ENCODE measurements at regions of chr14 and their contacts with region 1.

Region 1: GRCh38 chr14:69346710-69347109 is 51.4 kb downstream of the ERH start:
- DNase-seq: peak; percentile 33 to 95
- H3K4me3 ChIP-seq: peak overlapping the region in 2 of 4 experiments; percentile 7 to 14; a peak in 1 of 8 replicates
- H3K27ac ChIP-seq: no peak overlapping the region
- H3K4me1 ChIP-seq: peaks cover 0 to 6% (median 2%) of the 10 kb centered on the region in 4 experiments; a peak in 5 of 7 replicates
- H3K27me3 ChIP-seq: no peaks in the 10 kb centered on the region
- CTCF ChIP-seq: peak; percentile 92 to 93 (median 92)
- EP300 ChIP-seq: no peak
- POLR2A ChIP-seq: no peak
- RAD21 ChIP-seq: peak; percentile 73 to 82

Region 2: GRCh38 chr14:69281450-69282169 is 65.1 kb before region 1 on chr14:
- CTCF ChIA-PET with region 1: interaction called, 21 read pairs
- POLR2A ChIA-PET with region 1: interaction called, 3 read pairs
- DNase-seq: no peak
- H3K4me3 ChIP-seq: no peak overlapping the region
- H3K27ac ChIP-seq: no peak overlapping the region
- H3K4me1 ChIP-seq: no peaks in the 10 kb centered on the region
- H3K27me3 ChIP-seq: no peaks in the 10 kb centered on the region
- CTCF ChIP-seq: no peak
- EP300 ChIP-seq: no peak
- POLR2A ChIP-seq: no peak
- RAD21 ChIP-seq: no peak

Region 3: GRCh38 chr14:69299286-69300035 is 47.2 kb before region 1 on chr14:
- CTCF ChIA-PET with region 1: interaction called, 91 read pairs
- POLR2A ChIA-PET with region 1: no interaction called
- DNase-seq: peak in 1 of 2 experiments; percentile 55
- H3K4me3 ChIP-seq: no peak overlapping the region
- H3K27ac ChIP-seq: no peak overlapping the region
- H3K4me1 ChIP-seq: no peaks in the 10 kb centered on the region
- H3K27me3 ChIP-seq: no peaks in the 10 kb centered on the region
- CTCF ChIP-seq: peak; percentile 65 to 90 (median 86)
- EP300 ChIP-seq: no peak
- POLR2A ChIP-seq: no peak
- RAD21 ChIP-seq: peak; percentile 66 to 72

Region 4: DNA sequence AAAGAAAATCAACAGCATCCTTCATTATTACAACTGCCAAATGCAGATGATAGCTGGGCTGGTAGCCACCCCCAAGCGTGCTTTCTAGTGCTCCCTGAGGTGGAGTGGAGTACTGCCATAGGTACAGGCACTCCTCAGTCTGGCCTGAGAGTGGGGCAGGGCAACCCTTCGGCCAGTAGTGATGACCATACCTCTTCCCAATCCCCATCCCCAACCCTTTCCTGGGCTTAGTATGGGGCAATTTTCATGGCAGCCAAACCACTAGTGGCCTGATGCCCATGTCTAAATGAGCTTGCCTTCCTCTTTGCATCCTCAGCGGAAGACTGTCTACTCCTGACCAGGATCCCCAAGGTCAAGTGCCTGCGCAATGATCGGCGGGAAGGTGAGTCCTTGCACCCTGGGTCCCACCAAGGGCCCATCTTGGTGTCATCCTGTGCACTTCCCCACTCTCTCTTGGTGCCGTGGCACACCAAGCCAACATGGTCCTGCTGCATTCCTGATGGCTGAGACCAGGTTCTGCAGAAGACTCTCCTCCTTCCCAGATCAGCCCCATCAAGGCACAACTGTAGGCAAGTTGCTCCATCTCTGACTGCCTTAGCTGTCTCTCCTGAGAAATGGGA is 21.0 kb before region 1 on chr14:
- CTCF ChIA-PET with region 1: interaction called, 140 read pairs
- POLR2A ChIA-PET with region 1: interaction called, 3 read pairs
- DNase-seq: no peak
- H3K4me3 ChIP-seq: no peak overlapping the region
- H3K27ac ChIP-seq: no peak overlapping the region
- H3K4me1 ChIP-seq: peaks cover 0 to 15% (median 6%) of the 10 kb centered on the region in 4 experiments; a peak in 6 of 7 replicates
- H3K27me3 ChIP-seq: no peaks in the 10 kb centered on the region
- CTCF ChIP-seq: peak; percentile 32 to 50 (median 39)
- EP300 ChIP-seq: no peak
- POLR2A ChIP-seq: no peak
- RAD21 ChIP-seq: peak; percentile 22 to 28; a peak in 1 of 4 replicates

Region 5: GRCh38 chr14:69363055-69363454 is 16.3 kb after region 1 on chr14:
- CTCF ChIA-PET with region 1: interaction called, 78 read pairs
- POLR2A ChIA-PET with region 1: interaction called, 3 read pairs
- DNase-seq: peak in 1 of 2 experiments; percentile 27
- H3K4me3 ChIP-seq: no peak overlapping the region
- H3K27ac ChIP-seq: no peak overlapping the region
- H3K4me1 ChIP-seq: peaks cover 0 to 3% (median 0%) of the 10 kb centered on the region in 4 experiments; a peak in 1 of 7 replicates
- H3K27me3 ChIP-seq: no peaks in the 10 kb centered on the region
- CTCF ChIP-seq: peak; percentile 88 to 95 (median 88)
- EP300 ChIP-seq: no peak
- POLR2A ChIP-seq: no peak
- RAD21 ChIP-seq: peak; percentile 93 to 95

Region 6: GRCh38 chr14:69460093-69460701 is 113.5 kb after region 1 on chr14:
- CTCF ChIA-PET with region 1: interaction called, 11 read pairs
- POLR2A ChIA-PET with region 1: no interaction called
- DNase-seq: no peak
- H3K4me3 ChIP-seq: no peak overlapping the region
- H3K27ac ChIP-seq: no peak overlapping the region
- H3K4me1 ChIP-seq: no peaks in the 10 kb centered on the region
- H3K27me3 ChIP-seq: no peaks in the 10 kb centered on the region
- CTCF ChIP-seq: peak in 2 of 3 experiments; percentile 60 to 80; a peak in 3 of 4 replicates
- EP300 ChIP-seq: no peak
- POLR2A ChIP-seq: no peak
- RAD21 ChIP-seq: peak; percentile 70 to 75

Region 7: GRCh38 chr14:69547701-69548348 is 201.1 kb after region 1 on chr14:
- CTCF ChIA-PET with region 1: no interaction called
- POLR2A ChIA-PET with region 1: no interaction called
- DNase-seq: peak in 1 of 2 experiments; percentile 91
- H3K4me3 ChIP-seq: peak overlapping the region; percentile 45 to 68 (median 62)
- H3K27ac ChIP-seq: no peak overlapping the region
- H3K4me1 ChIP-seq: peaks cover 0 to 15% (median 4%) of the 10 kb centered on the region in 4 experiments; a peak in 5 of 7 replicates
- H3K27me3 ChIP-seq: no peaks in the 10 kb centered on the region; a peak in 3 of 7 replicates
- CTCF ChIP-seq: peak; percentile 80 to 90 (median 86)
- EP300 ChIP-seq: no peak
- POLR2A ChIP-seq: peak in 1 of 2 experiments; percentile 50; a peak in 2 of 3 replicates
- RAD21 ChIP-seq: peak; percentile 52 to 75; a peak in 3 of 4 replicates

Measured in H1 (cell line).